Dorsolateral prefrontal cortex (tissue), 120 donors: ENCODE measurements at regions of chr1 and their contacts with region 1.

Region 1: GRCh38 chr1:98053471-98054366 is 132.9 kb upstream of the DPYD start:
- DNase-seq: peak in 9 of 10 donors; percentile 13 to 80 (median 51)
- H3K4me3 ChIP-seq: peak overlapping the region; percentile 48 to 84 (median 68)
- H3K27ac ChIP-seq: peak overlapping the region in 29 of 59 donors; percentile 15 to 71 (median 39)
- H3K27me3 ChIP-seq: peaks cover 0 to 21% (median 0%) of the 10 kb centered on the region in 45 donors
- CTCF ChIP-seq: peak; percentile 54 to 96 (median 86)

Region 2: DNA sequence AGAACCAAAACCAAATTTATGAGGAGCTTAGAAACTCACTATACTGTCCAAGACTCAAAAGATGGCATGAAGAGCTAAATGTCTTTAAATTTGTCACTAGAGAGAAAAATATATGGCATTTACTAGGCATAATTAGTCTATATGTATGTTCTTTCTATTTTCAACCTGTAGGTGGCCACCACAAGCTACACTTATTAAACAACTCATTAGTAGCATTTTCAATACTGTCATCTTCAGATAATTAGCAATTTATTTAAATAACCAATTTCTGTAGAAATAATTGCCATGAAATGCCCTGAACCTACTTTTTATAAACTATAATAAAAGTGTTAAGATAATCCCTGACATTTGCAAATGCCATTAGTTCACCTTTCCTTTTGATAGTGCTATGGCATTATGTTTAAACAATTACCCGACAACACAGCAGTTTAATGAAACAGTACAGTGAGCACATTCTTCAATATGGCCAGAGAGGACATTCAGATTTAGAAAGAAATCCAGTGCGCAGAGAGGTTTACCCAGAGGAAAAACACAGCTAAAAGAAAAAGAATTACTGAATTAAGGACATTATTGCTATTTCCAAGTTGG is 809.7 kb before region 1 on chr1:
- intact Hi-C with region 1: loop called in 1 of 2 experiments (anchors 10 kb)
- DNase-seq: no peak
- H3K4me3 ChIP-seq: no peak overlapping the region
- H3K27ac ChIP-seq: peak overlapping the region in 2 of 59 donors; percentile 4 to 7
- H3K27me3 ChIP-seq: no peaks in the 10 kb centered on the region
- CTCF ChIP-seq: peak; percentile 31 to 80 (median 59)